Right ventricle myocardium superior (tissue), 1 donor: ENCODE measurements at regions of chr15 and their contacts with region 1.

Region 1: DNA sequence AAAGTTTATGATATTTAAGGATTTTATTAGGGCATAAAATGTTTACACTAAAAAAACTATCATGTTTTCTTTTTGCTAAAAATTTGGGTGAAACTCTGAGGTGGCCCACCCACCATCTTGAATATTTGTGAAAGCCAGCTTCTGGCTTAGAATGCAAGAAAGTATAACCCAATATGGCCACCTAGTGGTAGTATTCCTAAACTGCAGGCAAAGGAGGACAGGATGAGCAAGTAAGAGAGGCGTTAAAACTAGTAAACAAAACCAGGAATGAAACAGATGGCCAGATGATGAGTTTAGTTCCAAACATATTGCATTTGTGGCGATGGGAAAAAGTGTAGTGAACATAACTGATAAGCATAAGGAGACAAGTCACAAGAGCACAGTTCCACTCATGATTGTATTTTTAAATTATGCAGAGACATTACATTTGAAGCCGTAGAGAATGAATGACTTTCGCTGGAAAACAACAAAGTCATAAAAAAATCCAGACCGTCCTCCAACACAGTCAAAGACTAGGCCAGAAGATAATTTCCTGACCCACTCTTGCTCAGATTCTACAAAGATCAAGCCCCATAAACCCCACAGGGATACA is 103.3 kb upstream of the PRTG start:
- DNase-seq: no peak
- ATAC-seq: peak; percentile 65

Region 2: DNA sequence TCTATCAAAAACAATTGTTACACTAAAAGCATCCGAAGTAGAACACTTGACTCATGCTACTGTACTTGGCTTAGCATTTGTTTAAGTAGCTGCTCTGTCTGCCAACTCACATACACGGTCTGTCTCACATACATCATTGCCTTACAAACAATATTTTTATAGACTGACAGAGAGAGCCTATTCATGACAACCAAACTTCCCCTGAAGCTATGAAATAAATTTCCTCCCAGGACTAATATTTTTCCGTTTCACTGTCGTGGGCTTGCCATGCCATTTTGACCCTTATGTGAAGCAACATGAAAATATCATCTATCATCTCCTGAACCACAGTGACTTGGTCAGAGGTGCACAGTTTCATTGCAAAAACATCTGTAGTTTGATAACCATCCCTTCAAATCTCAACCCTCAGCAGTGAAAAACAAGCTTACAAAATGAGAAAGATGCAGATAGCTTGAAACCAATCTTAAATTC is 191.6 kb before region 1 on chr15:
- intact Hi-C with region 1: loop called (anchors 10 kb)
- DNase-seq: no peak
- ATAC-seq: no peak

Region 3: GRCh38 chr15:55799291-55800212 is 46.7 kb before region 1 on chr15:
- intact Hi-C with region 1: loop called (anchors 10 kb)
- DNase-seq: no peak
- ATAC-seq: no peak